Posterior vena cava (tissue), 2 donors: ENCODE measurements at regions of chr1 and their contacts with region 1.

Region 1: DNA sequence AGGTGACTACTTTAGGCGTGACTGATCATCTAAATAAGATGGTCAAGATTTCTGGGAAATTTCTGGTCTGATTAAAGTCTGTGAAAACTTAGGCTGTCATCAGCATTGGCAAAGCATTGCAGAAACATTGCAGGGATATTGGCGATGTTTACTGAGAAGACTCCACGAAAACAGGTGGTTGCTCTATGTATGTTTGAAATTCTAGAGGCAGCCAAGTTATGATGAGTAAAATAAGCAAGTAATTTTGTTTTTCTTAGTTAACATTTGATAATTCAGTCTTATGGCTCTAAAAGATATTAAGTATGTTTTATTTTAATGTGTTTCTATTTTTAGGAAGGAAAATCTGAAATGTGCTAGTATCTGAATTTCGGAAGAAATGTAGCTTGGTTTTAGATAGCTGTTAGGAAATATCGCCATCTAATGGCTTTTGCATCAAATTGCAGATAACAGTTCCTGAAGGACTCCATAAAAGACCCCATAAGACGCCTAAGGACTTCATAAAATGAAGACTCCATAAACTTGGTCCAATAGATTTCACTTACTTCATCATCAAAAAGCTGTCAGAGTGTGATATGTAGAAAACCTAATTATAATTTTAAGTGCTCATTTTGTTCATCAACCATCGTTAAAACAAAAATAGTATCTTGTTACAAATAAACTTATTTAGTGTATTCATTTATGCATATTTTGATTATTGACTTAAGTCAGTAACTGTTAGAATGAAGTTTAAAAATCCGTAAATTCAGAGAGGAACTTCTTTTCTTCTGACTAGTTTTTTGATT is 344.6 kb downstream of the RYR2 start:
- DNase-seq: no peak

Region 2: DNA sequence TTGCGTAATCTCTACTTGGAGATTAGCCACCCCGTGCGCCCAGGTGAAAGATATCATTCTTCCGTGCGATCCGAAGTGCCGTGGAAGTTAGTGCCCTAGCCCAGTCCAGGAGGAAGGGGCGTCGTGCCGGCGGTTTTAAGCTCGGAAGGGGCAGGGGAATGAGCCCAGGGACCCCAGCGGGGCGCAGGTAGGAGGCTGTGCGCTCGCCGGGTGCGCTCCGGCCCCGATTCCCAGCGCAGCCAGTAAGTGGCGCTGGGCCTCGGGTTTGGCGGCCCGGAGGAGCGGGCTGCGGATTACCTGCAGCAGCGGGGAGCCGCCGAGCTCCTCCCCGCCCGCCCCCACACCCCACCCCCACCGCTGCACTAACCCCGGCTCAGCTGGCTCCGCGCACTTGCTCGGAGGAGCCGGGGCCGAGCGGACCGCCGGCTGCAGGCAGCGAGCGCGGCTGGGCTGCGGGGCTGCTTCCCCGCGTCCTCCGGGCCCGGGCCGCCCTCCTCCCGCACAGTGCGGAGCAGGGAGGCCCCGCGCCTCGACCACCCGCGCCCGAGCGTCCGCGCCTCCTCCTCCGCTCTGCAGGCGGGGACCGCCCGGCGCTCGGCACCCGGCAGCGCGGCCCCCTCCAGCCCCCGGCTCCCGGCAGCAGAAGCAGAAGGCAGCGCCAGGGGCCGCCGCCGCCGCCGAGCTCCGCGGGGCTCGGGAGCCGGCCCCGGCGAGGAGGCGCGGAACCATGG is 344.6 kb before region 1 on chr1 and contains the start of gene RYR2:
- intact Hi-C with region 1: loop called in 1 of 2 experiments (anchors 5 kb)
- DNase-seq: no peak
- total RNA-seq, gene RYR2: 7.6 to 8.8 TPM

Region 3: GRCh38 chr1:237258871-237259270 is 127.7 kb before region 1 on chr1:
- intact Hi-C with region 1: no loop called
- DNase-seq: no peak

Region 4: GRCh38 chr1:237580726-237581125 is 194.2 kb after region 1 on chr1:
- intact Hi-C with region 1: no loop called
- DNase-seq: no peak